Panc1 (cell line): ENCODE measurements at regions of chr18 and their contacts with region 1.

Region 1: DNA sequence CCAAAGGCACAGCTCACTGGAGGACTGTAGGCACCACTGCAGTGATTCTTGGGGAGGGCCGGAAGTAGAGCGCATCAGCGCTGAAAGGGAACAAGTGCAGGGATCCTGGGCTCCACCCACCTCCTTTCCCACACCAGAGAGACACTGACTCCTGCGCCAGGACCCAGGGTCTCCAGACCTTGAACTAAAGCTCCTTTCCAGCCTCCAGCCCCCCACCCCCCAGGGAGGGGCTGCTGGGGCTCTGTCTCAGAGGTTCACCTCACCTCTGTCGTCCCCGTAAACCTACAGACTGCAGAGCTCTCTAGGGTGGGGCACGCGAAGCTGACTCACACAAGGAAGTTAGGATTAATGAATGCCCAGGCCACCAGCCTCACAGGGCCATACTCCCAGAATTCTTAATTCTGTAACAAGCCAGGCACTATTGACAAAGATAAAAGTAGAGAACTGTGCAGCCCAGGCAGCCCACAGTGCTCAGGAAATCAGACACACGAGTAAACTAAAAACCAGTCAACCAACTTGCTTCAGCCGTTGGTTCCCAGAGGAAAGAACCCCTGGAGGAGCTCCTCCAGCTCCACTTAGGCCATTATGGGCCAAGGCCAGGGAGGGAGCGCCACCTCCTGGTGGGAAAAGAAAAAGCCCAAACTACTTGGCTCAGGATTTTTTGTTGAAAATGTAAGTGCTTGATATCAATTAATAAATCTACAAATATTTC is 45.1 kb upstream of the ACAA2 start:
- DNase-seq: no peak
- ATAC-seq: peak; percentile 83
- H3K4me3 ChIP-seq: no peak overlapping the region
- H3K27ac ChIP-seq: no peak overlapping the region
- H3K4me1 ChIP-seq: no peaks in the 10 kb centered on the region; the same call in 1 of the 2 replicates
- H3K27me3 ChIP-seq: no peaks in the 10 kb centered on the region
- CTCF ChIP-seq: peak; percentile 82

Region 2: GRCh38 chr18:49503931-49504330 is 354.5 kb before region 1 on chr18:
- CTCF ChIA-PET with region 1: no interaction called
- POLR2A ChIA-PET with region 1: interaction called, 17 read pairs
- in situ Hi-C with region 1: no loop called
- intact Hi-C with region 1: no loop called
- DNase-seq: no peak
- ATAC-seq: no peak
- H3K4me3 ChIP-seq: no peak overlapping the region
- H3K27ac ChIP-seq: no peak overlapping the region
- H3K4me1 ChIP-seq: no peaks in the 10 kb centered on the region
- H3K27me3 ChIP-seq: no peaks in the 10 kb centered on the region
- CTCF ChIP-seq: no peak

Region 3: GRCh38 chr18:49510393-49511115 is 347.9 kb before region 1 on chr18:
- CTCF ChIA-PET with region 1: interaction called, 9 read pairs
- POLR2A ChIA-PET with region 1: no interaction called
- in situ Hi-C with region 1: no loop called
- intact Hi-C with region 1: loop called (anchors 1 kb)
- DNase-seq: no peak
- ATAC-seq: peak; percentile 92
- H3K4me3 ChIP-seq: no peak overlapping the region
- H3K27ac ChIP-seq: no peak overlapping the region
- H3K4me1 ChIP-seq: no peaks in the 10 kb centered on the region
- H3K27me3 ChIP-seq: no peaks in the 10 kb centered on the region
- CTCF ChIP-seq: peak; percentile 79

Region 4: DNA sequence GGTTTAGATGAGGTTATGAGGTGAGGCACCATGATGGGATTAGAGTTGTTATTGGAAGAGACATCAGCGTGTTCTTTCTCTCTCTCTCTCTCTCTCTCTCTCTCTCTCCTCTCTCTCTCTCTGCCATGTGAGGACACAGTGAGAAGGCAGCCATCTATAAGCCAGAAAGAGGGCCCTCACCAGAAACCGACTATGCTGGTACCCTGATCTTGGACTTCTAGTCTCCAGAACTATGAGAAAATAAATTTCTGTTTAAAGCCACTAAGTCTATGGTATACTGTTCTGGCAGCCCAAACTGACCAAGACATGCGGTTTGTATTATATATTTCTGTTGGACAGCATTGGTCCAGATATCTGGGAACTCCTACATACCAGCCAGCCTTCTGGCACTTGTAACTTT is 300.1 kb before region 1 on chr18:
- CTCF ChIA-PET with region 1: interaction called, 3 read pairs
- POLR2A ChIA-PET with region 1: no interaction called
- in situ Hi-C with region 1: no loop called
- intact Hi-C with region 1: loop called (anchors 2 kb)
- DNase-seq: no peak
- ATAC-seq: no peak
- H3K4me3 ChIP-seq: no peak overlapping the region
- H3K27ac ChIP-seq: no peak overlapping the region
- H3K4me1 ChIP-seq: no peaks in the 10 kb centered on the region; the same call in 1 of the 2 replicates
- H3K27me3 ChIP-seq: no peaks in the 10 kb centered on the region
- CTCF ChIP-seq: no peak